K562 (cell line): ENCODE measurements at regions of chr1 and their contacts with region 1.

Region 1: GRCh38 chr1:8598060-8598724 is 219.2 kb downstream of the RERE start:
- DNase-seq: no peak
- ATAC-seq: peak; percentile 51
- H3K4me3 ChIP-seq: no peak overlapping the region
- H3K27ac ChIP-seq: no peak overlapping the region
- H3K4me1 ChIP-seq: no peaks in the 10 kb centered on the region
- H3K27me3 ChIP-seq: no peaks in the 10 kb centered on the region
- CTCF ChIP-seq: no peak; a peak in 3 of 6 replicates
- EP300 ChIP-seq: no peak
- POLR2A ChIP-seq: no peak
- RAD21 ChIP-seq: no peak

Region 2: GRCh38 chr1:8586438-8586837 is 11.8 kb before region 1 on chr1:
- CTCF ChIA-PET with region 1: no interaction called
- POLR2A ChIA-PET with region 1: interaction called, 12 read pairs
- in situ Hi-C with region 1: no loop called
- intact Hi-C with region 1: no loop called
- DNase-seq: no peak
- ATAC-seq: no peak
- H3K4me3 ChIP-seq: no peak overlapping the region
- H3K27ac ChIP-seq: no peak overlapping the region
- H3K4me1 ChIP-seq: peaks cover 0 to 6% of the 10 kb centered on the region in 2 experiments; a peak in 3 of 5 replicates
- H3K27me3 ChIP-seq: no peaks in the 10 kb centered on the region
- CTCF ChIP-seq: no peak
- EP300 ChIP-seq: no peak
- POLR2A ChIP-seq: no peak
- RAD21 ChIP-seq: no peak

Region 3: DNA sequence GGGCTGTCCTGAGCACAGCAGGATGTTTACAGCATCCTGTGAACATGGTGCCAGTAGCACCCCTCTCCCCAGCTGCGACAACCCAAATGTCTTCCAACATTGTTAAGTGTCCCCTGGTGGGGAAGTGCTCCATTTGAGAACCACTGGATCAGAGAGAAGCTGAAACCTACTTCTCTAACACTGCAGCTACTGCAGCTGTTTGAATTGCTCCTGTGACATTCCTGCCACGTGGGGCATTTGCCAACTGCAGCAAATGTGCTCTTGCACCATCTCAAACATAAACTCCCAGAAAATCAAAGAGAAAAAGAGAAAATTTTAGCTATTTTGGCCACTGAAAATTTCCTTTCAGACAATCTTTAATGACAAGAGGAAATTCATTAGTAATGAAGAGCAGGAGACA is 460.3 kb after region 1 on chr1:
- CTCF ChIA-PET with region 1: no interaction called
- POLR2A ChIA-PET with region 1: no interaction called
- in situ Hi-C with region 1: no loop called
- intact Hi-C with region 1: no loop called
- DNase-seq: peak in 2 of 4 experiments; percentile 3
- ATAC-seq: no peak; the same call in 2 of the 3 replicates
- H3K4me3 ChIP-seq: no peak overlapping the region
- H3K27ac ChIP-seq: no peak overlapping the region
- H3K4me1 ChIP-seq: no peaks in the 10 kb centered on the region
- H3K27me3 ChIP-seq: peaks cover 12 to 35% of the 10 kb centered on the region in 2 experiments
- CTCF ChIP-seq: no peak
- EP300 ChIP-seq: no peak
- POLR2A ChIP-seq: no peak
- RAD21 ChIP-seq: no peak